GM12878 (cell line): ENCODE measurements at regions of chr9 and their contacts with region 1.

Region 1: DNA sequence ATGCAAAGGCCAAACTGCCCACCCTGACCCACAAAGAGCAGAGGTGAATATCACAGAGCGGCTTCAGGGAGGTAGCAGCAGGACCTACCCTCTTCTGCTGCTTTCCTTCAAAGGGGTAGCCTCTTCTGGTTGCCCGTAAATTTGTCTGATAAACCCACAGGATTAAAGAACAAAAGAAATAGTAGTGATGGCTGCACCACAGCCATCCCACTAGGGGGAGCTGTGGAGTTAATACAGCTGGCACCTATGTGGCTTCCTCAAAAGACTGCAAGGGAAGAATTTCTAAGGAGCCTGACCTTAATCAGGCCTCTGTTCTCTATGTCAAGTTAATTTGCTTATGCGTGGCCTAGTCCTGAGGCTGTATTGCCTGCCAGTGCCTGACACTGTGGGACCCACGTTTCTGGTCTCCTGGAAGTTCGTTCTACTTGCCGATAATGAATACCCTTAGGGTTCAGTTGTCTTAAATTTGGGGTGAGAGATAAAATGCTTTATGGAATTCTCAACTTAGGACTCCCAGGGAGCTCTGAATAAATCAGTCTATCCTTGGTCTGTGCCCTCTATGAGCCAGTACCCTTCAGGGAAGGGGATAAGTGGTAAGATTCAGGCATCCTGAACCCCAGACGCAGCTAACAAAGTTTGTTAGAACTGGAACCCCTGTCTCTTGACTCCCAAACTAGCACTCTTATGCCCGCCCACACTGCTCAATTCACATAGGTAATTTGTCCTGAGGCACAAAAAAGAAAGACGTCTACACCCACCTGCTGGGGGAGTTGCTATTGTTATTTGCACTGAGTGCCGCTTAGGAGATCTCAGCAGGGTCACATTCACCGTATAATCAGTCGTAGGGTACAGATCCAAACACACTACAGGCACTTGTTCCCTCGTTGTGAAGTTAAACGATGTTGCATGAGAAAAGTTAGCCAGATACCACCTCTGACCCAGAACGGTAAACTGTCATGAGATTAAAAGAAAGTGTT is 77.1 kb downstream of the SUSD1 start:
- DNase-seq: no peak
- ATAC-seq: peak; percentile 93
- H3K4me3 ChIP-seq: no peak overlapping the region
- H3K27ac ChIP-seq: no peak overlapping the region
- H3K4me1 ChIP-seq: peaks cover 5% of the 10 kb centered on the region; the same call in 1 of the 2 replicates
- H3K27me3 ChIP-seq: no peaks in the 10 kb centered on the region
- CTCF ChIP-seq: peak; percentile 86 to 93 (median 88)
- EP300 ChIP-seq: no peak
- POLR2A ChIP-seq: no peak
- RAD21 ChIP-seq: peak; percentile 91

Region 2: DNA sequence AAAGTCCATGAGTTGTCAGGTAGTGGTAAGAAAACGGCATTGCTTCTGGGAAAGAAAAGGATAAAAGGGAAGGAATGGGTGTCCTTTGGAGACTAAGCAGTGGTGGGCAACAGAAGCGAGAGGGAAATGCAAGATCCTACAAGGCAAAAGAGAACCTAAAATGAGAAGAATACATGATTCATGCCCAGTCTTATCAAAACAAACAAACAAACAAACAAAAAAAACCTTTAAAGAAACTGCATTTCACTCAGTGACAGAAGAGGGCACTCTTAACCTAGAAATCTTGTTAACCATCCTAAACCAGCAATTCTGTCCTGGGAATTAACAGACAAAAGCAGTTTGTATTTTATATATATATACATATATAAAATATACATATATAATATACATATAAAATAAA is 11.4 kb before region 1 on chr9:
- CTCF ChIA-PET with region 1: interaction called, 125 read pairs
- POLR2A ChIA-PET with region 1: interaction called, 5 read pairs
- RAD21 ChIA-PET with region 1: interaction called, 6 read pairs
- SMC1A ChIA-PET with region 1: interaction called, 24 read pairs
- in situ Hi-C with region 1: no loop called
- intact Hi-C with region 1: no loop called
- DNase-seq: no peak
- ATAC-seq: peak; percentile 36; the same call in 1 of the 3 replicates
- H3K4me3 ChIP-seq: no peak overlapping the region
- H3K27ac ChIP-seq: no peak overlapping the region
- H3K4me1 ChIP-seq: no peaks in the 10 kb centered on the region; the same call in 1 of the 2 replicates
- H3K27me3 ChIP-seq: no peaks in the 10 kb centered on the region
- CTCF ChIP-seq: peak; percentile 47 to 59 (median 51); a peak in 5 of 6 replicates
- EP300 ChIP-seq: no peak
- POLR2A ChIP-seq: no peak
- RAD21 ChIP-seq: peak; percentile 83

Region 3: GRCh38 chr9:112218908-112219307 is 120.9 kb after region 1 on chr9:
- CTCF ChIA-PET with region 1: interaction called, 5 read pairs
- POLR2A ChIA-PET with region 1: no interaction called
- RAD21 ChIA-PET with region 1: interaction called, 10 read pairs
- SMC1A ChIA-PET with region 1: interaction called, 3 read pairs
- in situ Hi-C with region 1: no loop called
- intact Hi-C with region 1: loop called (anchors 5 kb)
- DNase-seq: peak; percentile 85
- ATAC-seq: peak; percentile 98
- H3K4me3 ChIP-seq: no peak overlapping the region
- H3K27ac ChIP-seq: peak overlapping the region; percentile 65
- H3K4me1 ChIP-seq: peaks cover 26% of the 10 kb centered on the region
- H3K27me3 ChIP-seq: no peaks in the 10 kb centered on the region
- CTCF ChIP-seq: no peak
- EP300 ChIP-seq: peak in 1 of 2 experiments; percentile 50; a peak in 1 of 4 replicates
- POLR2A ChIP-seq: no peak
- RAD21 ChIP-seq: 0 out of 2 replicates have a peak, but pooled peaks have one; percentile 29

Region 4: GRCh38 chr9:112333639-112334431 is 235.8 kb after region 1 on chr9:
- CTCF ChIA-PET with region 1: interaction called, 10 read pairs
- POLR2A ChIA-PET with region 1: no interaction called
- RAD21 ChIA-PET with region 1: interaction called, 14 read pairs
- SMC1A ChIA-PET with region 1: interaction called, 11 read pairs
- in situ Hi-C with region 1: no loop called
- intact Hi-C with region 1: loop called (anchors 1 kb)
- DNase-seq: peak; percentile 57
- ATAC-seq: peak; percentile 80
- H3K4me3 ChIP-seq: peak overlapping the region; percentile 94
- H3K27ac ChIP-seq: peak overlapping the region; percentile 77
- H3K4me1 ChIP-seq: peaks cover 4% of the 10 kb centered on the region; the same call in 1 of the 2 replicates
- H3K27me3 ChIP-seq: no peaks in the 10 kb centered on the region
- CTCF ChIP-seq: peak in 2 of 3 experiments; percentile 18 to 49; a peak in 5 of 6 replicates
- EP300 ChIP-seq: no peak
- POLR2A ChIP-seq: no peak
- RAD21 ChIP-seq: peak; percentile 58

Region 5: DNA sequence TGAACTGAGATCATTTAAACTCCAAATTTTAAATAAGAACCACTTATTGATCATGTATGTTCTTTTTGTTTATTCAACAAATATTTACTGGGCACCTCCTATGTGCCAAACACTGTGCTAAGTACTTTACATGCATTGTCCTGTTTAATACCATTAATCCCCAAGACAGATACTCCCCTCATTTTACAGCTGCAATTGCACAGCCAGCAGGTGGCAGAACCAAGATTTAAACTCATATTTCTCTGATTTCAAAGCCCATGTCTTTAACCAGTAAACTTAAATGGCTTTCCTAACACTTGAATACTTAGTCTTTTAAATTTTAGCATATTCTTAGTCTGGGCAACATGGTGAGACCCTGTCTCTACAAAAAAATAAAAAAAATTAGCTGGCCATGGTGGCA is 345.2 kb after region 1 on chr9:
- CTCF ChIA-PET with region 1: interaction called, 4 read pairs
- POLR2A ChIA-PET with region 1: no interaction called
- RAD21 ChIA-PET with region 1: no interaction called
- SMC1A ChIA-PET with region 1: no interaction called
- in situ Hi-C with region 1: no loop called
- intact Hi-C with region 1: loop called (anchors 10 kb)
- DNase-seq: no peak
- ATAC-seq: peak; percentile 61
- H3K4me3 ChIP-seq: no peak overlapping the region
- H3K27ac ChIP-seq: no peak overlapping the region
- H3K4me1 ChIP-seq: peaks cover 4% of the 10 kb centered on the region; the same call in 1 of the 2 replicates
- H3K27me3 ChIP-seq: no peaks in the 10 kb centered on the region
- CTCF ChIP-seq: peak; percentile 57 to 58 (median 58)
- EP300 ChIP-seq: no peak
- POLR2A ChIP-seq: no peak
- RAD21 ChIP-seq: peak; percentile 55

Region 6: GRCh38 chr9:112819635-112820496 is 721.9 kb after region 1 on chr9:
- CTCF ChIA-PET with region 1: interaction called, 4 read pairs
- POLR2A ChIA-PET with region 1: no interaction called
- RAD21 ChIA-PET with region 1: no interaction called
- SMC1A ChIA-PET with region 1: interaction called, 3 read pairs
- in situ Hi-C with region 1: loop called (anchors 10 kb)
- intact Hi-C with region 1: no loop called
- DNase-seq: peak; percentile 26
- ATAC-seq: peak; percentile 96
- H3K4me3 ChIP-seq: no peak overlapping the region
- H3K27ac ChIP-seq: no peak overlapping the region
- H3K4me1 ChIP-seq: peaks cover 13% of the 10 kb centered on the region
- H3K27me3 ChIP-seq: no peaks in the 10 kb centered on the region; a peak in 2 of 4 replicates
- CTCF ChIP-seq: peak; percentile 69 to 76 (median 76)
- EP300 ChIP-seq: no peak
- POLR2A ChIP-seq: no peak
- RAD21 ChIP-seq: peak; percentile 85